ENCODE measurements at regions of chr3 and their contacts with region 1.

Region 1: GRCh38 chr3:116824208-116824607 is 114.6 kb downstream of the TUSC7 start:
- DNase-seq: no peak
- ATAC-seq: no peak
- H3K4me3 ChIP-seq: no peak overlapping the region
- H3K27ac ChIP-seq: no peak overlapping the region
- H3K4me1 ChIP-seq: no peaks in the 10 kb centered on the region
- H3K27me3 ChIP-seq: no peaks in the 10 kb centered on the region
- CTCF ChIP-seq: no peak
- POLR2A ChIP-seq: no peak
- RAD21 ChIP-seq: no peak

Region 2: DNA sequence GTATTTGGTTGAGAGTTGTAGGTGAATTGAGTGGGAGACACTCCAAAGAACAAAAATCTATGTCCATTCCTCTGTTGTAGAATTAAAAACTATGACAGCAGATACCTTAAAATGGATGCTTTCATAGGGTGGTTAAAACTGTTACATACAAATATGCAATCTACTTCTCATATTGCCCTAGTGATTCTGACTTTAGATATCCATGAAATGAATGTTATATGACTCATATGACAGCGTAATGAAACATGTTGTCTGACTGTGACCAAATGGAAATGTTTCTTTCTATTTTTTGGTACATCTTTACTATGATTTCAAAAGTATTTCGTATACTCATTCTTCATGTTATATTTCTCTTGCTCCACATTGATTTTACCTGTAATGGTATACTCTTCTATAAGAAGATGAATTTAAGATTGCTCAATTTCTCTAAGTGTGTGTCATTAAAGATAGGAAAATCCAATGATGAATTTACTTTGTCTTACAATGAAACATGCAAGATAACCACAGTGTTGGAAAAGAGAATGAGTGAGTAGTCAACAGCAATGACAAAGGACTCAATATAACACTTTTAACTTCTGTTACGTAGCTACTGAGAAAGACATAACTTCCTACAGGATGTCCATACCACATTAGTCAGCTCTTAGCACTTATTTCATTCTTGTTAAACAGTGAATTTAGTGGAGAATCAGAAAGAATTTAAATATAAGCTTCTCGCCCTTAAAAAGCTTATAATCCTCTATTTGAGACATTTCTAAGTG is 299.6 kb before region 1 on chr3:
- CTCF ChIA-PET with region 1: no interaction called
- POLR2A ChIA-PET with region 1: no interaction called
- RAD21 ChIA-PET with region 1: no interaction called
- intact Hi-C with region 1: no loop called
- DNase-seq: no peak
- ATAC-seq: no peak
- H3K4me3 ChIP-seq: no peak overlapping the region
- H3K27ac ChIP-seq: no peak overlapping the region
- H3K4me1 ChIP-seq: no peaks in the 10 kb centered on the region
- H3K27me3 ChIP-seq: no peaks in the 10 kb centered on the region
- CTCF ChIP-seq: no peak
- POLR2A ChIP-seq: no peak
- RAD21 ChIP-seq: no peak

Region 3: DNA sequence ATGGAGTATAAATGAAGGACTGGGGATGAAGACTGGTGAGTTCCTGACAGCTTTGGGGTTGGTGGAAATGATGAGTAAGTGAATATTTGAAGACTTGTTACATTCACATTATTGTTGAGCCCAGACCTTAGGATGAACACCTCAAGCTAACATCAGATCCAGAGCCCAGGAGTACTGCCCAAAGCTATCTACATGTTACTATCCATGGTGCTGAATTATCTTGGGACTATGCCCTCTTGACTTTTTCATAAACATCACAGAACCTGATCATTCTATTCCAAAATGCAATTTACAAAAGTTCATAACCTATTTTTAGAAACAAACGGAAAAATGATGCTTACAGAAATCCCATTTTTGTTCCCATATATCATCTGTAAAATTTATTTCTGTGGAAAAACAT is 498.7 kb after region 1 on chr3:
- CTCF ChIA-PET with region 1: no interaction called
- POLR2A ChIA-PET with region 1: no interaction called
- RAD21 ChIA-PET with region 1: no interaction called
- intact Hi-C with region 1: loop called (anchors 10 kb)
- DNase-seq: no peak
- ATAC-seq: no peak
- H3K4me3 ChIP-seq: no peak overlapping the region
- H3K27ac ChIP-seq: no peak overlapping the region
- H3K4me1 ChIP-seq: no peaks in the 10 kb centered on the region
- H3K27me3 ChIP-seq: no peaks in the 10 kb centered on the region
- CTCF ChIP-seq: no peak
- POLR2A ChIP-seq: no peak
- RAD21 ChIP-seq: no peak